Ascending aorta (tissue), 2 donors: ENCODE measurements at regions of chr3 and their contacts with region 1.

Region 1: DNA sequence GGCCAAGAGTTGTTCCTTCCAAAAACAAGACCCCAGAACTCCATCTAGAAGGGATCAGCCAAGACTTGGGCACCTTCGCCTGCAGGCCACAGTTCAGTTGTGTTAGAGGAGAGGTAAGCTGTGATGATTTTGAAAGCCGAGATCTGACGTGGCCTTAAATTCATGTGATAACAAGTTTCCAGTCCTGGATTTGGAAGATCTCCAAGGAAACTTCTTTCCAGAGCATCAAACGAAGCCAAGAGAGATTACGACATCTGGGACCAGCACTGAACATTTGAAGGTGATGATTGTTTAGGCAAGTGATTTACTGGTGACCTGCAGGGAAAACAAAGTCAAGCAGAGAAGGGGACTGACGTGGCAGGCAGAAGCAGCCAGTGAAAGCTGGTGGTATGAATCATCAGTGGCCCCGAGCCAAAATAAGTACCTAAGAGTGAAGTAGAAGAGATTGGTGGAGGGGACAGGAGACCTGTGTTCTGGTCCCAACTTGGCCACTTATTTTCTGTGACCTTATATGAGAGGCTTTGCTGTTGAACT is 339.0 kb upstream of the PROK2 start:
- DNase-seq: peak in 1 of 2 donors; percentile 93
- H3K4me3 ChIP-seq: no peak overlapping the region
- H3K27ac ChIP-seq: peak overlapping the region; percentile 41 to 46
- H3K4me1 ChIP-seq: peaks cover 10 to 21% of the 10 kb centered on the region in 2 donors
- H3K27me3 ChIP-seq: no peaks in the 10 kb centered on the region
- CTCF ChIP-seq: no peak

Region 2: GRCh38 chr3:72234391-72234790 is 110.4 kb after region 1 on chr3:
- intact Hi-C with region 1: loop called (anchors 5 kb)
- DNase-seq: peak in 1 of 2 donors; percentile 83
- H3K4me3 ChIP-seq: no peak overlapping the region
- H3K27ac ChIP-seq: peak overlapping the region in 1 of 2 donors; percentile 36
- H3K4me1 ChIP-seq: peaks cover 7 to 25% of the 10 kb centered on the region in 2 donors
- H3K27me3 ChIP-seq: no peaks in the 10 kb centered on the region
- CTCF ChIP-seq: no peak